GM12878 (cell line): ENCODE measurements at regions of chr10 and their contacts with region 1.

Region 1: GRCh38 chr10:80459047-80459931 is 5.2 kb downstream of the TSPAN14 start:
- DNase-seq: peak; percentile 73
- ATAC-seq: peak; percentile 59
- H3K4me3 ChIP-seq: peak overlapping the region; percentile 92; the same call in 1 of the 2 replicates
- H3K27ac ChIP-seq: peak overlapping the region; percentile 45
- H3K4me1 ChIP-seq: peaks cover 79% of the 10 kb centered on the region
- H3K27me3 ChIP-seq: no peaks in the 10 kb centered on the region
- CTCF ChIP-seq: peak; percentile 11 to 15 (median 14); a peak in 2 of 6 replicates
- EP300 ChIP-seq: no peak
- POLR2A ChIP-seq: peak; percentile 43; the same call in 1 of the 2 replicates
- RAD21 ChIP-seq: no peak

Region 2: DNA sequence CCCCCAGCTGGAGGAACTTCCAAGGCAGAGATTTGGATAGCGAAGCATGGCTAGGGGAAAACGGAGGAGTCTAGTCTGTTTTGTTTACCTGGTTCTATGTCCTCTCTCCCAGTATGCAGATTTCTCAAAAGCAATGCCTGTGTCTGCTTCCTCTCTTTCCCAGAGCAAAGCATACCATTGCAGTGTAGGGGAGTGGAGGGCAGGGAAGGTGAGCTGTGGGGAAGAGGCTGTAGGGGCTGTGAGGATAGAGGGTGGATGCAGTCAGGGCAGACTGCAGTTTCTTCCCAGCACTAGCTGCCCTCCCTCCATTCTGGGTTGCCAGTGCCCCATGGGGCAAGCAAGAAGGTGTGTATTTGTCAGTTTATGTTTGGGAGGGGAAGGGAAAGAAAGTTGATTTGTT is 22.1 kb before region 1 on chr10:
- CTCF ChIA-PET with region 1: no interaction called
- POLR2A ChIA-PET with region 1: no interaction called
- RAD21 ChIA-PET with region 1: no interaction called
- SMC1A ChIA-PET with region 1: no interaction called
- in situ Hi-C with region 1: no loop called
- intact Hi-C with region 1: no loop called
- DNase-seq: no peak
- ATAC-seq: no peak
- H3K4me3 ChIP-seq: no peak overlapping the region
- H3K27ac ChIP-seq: no peak overlapping the region
- H3K4me1 ChIP-seq: peaks cover 7% of the 10 kb centered on the region; the same call in 1 of the 2 replicates
- H3K27me3 ChIP-seq: no peaks in the 10 kb centered on the region; a peak in 1 of 4 replicates
- CTCF ChIP-seq: no peak
- EP300 ChIP-seq: no peak
- POLR2A ChIP-seq: no peak
- RAD21 ChIP-seq: no peak

Region 3: GRCh38 chr10:80472234-80473095 is 13.2 kb after region 1 on chr10:
- CTCF ChIA-PET with region 1: interaction called, 76 read pairs
- POLR2A ChIA-PET with region 1: interaction called, 190 read pairs
- RAD21 ChIA-PET with region 1: interaction called, 122 read pairs
- SMC1A ChIA-PET with region 1: interaction called, 192 read pairs
- in situ Hi-C with region 1: no loop called
- intact Hi-C with region 1: loop called (anchors 1 kb)
- DNase-seq: peak; percentile 92
- ATAC-seq: peak; percentile 88
- H3K4me3 ChIP-seq: peak overlapping the region; percentile 35
- H3K27ac ChIP-seq: peak overlapping the region; percentile 87
- H3K4me1 ChIP-seq: peaks cover 65% of the 10 kb centered on the region
- H3K27me3 ChIP-seq: no peaks in the 10 kb centered on the region
- CTCF ChIP-seq: no peak
- EP300 ChIP-seq: peak; percentile 66 to 67; a peak in 2 of 4 replicates
- POLR2A ChIP-seq: no peak
- RAD21 ChIP-seq: no peak

Region 4: DNA sequence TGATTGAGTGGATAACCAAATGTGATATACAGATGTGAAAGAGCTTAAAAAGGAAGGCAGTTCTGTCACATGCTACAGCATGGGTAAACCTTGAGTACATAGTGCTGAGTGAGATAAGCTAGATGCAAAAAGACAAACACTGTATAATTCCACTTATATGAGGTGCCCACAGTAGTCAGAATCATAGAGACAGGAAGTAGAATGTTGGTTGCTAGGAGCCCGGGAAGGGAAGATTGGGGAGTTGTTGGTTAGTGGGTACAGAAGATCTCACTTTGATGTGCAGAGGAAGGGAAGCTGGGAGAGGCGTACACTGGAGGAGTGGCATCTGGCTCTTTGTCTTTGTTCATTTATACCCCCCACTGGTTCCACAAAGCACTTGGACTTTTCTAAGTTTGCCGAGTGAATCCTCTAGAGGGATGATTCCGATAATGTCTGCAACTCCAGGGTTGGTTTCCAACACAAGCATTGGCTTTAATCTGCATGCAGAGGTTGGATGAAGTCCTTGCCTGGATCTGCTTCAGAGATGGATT is 34.3 kb after region 1 on chr10:
- CTCF ChIA-PET with region 1: interaction called, 402 read pairs
- POLR2A ChIA-PET with region 1: interaction called, 60 read pairs
- RAD21 ChIA-PET with region 1: interaction called, 412 read pairs
- SMC1A ChIA-PET with region 1: interaction called, 1,038 read pairs
- in situ Hi-C with region 1: no loop called
- intact Hi-C with region 1: no loop called
- DNase-seq: no peak
- ATAC-seq: peak; percentile 75
- H3K4me3 ChIP-seq: peak overlapping the region; percentile 15; the same call in 1 of the 2 replicates
- H3K27ac ChIP-seq: peak overlapping the region; percentile 47
- H3K4me1 ChIP-seq: peaks cover 26% of the 10 kb centered on the region
- H3K27me3 ChIP-seq: no peaks in the 10 kb centered on the region
- CTCF ChIP-seq: no peak
- EP300 ChIP-seq: no peak
- POLR2A ChIP-seq: no peak
- RAD21 ChIP-seq: no peak

Region 5: GRCh38 chr10:81036257-81036656 is 577.0 kb after region 1 on chr10:
- CTCF ChIA-PET with region 1: no interaction called
- POLR2A ChIA-PET with region 1: no interaction called
- RAD21 ChIA-PET with region 1: no interaction called
- SMC1A ChIA-PET with region 1: no interaction called
- in situ Hi-C with region 1: no loop called
- intact Hi-C with region 1: loop called (anchors 5 kb)
- DNase-seq: peak; percentile 81
- ATAC-seq: peak; percentile 90
- H3K4me3 ChIP-seq: no peak overlapping the region
- H3K27ac ChIP-seq: peak overlapping the region; percentile 65
- H3K4me1 ChIP-seq: peaks cover 26% of the 10 kb centered on the region
- H3K27me3 ChIP-seq: no peaks in the 10 kb centered on the region
- CTCF ChIP-seq: no peak
- EP300 ChIP-seq: peak; percentile 86 to 97; a peak in 3 of 4 replicates
- POLR2A ChIP-seq: no peak
- RAD21 ChIP-seq: no peak